ENCODE measurements at regions of chr6 and their contacts with region 1.

Region 1: DNA sequence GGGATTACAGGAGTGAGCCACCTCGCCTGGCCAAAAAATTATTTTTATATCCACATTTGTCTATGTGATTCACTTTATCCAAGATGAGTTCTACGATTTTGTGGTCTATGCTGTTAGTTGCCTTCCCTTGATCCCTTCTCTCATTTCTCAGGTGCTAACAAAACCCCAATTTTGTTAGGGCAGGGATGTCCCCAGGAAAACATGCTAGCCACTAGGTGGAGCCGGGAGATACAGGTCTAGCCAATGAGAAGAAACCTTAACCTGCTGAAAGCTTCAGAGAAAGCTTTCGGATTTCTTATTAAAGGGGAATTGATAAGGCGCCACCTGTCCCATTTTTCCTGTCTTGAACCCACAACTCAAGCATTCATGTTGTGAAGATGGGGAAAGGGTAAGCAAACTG is 167.4 kb upstream of the OLIG3 start:
- DNase-seq: peak; percentile 58
- H3K4me3 Mint-ChIP-seq: no peak overlapping the region
- H3K27ac Mint-ChIP-seq: no peak overlapping the region
- H3K4me1 Mint-ChIP-seq: peaks cover 24% of the 10 kb centered on the region
- H3K27me3 Mint-ChIP-seq: peaks cover 8% of the 10 kb centered on the region

Region 2: DNA sequence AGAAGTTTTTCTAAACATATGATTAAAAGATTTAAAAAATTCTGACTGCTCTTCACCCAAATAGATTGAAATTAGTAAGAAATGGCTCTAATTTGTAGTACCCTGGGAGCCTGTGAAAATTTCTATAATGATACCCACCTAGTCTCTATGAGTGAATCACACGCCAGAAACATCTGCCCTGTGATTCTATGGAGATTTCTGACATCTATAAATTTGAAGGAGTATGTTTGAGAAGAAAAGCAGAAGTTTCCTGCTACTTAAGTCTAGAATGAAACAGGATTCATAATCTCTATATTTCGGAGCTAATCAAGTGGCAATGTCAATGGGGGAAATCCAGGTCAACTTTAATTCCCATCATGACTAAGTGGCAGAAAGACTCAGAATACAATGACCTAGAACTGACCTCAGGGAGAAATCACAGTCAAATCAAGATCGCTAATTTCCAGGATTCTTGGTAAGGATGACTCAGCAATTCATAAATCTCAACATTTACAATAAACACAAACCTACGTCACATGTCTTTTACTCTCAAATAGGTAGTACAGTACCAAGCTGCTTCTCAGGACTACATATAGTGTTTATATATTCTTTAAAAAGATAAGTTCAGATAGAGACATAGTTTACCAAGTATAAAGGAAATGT is 19.2 kb after region 1 on chr6:
- CTCF ChIA-PET with region 1: interaction called, 6 read pairs
- POLR2A ChIA-PET with region 1: interaction called, 24 read pairs
- intact Hi-C with region 1: loop called (anchors 1 kb)
- DNase-seq: no peak
- H3K4me3 Mint-ChIP-seq: peak overlapping the region; percentile 18
- H3K27ac Mint-ChIP-seq: peak overlapping the region; percentile 75
- H3K4me1 Mint-ChIP-seq: peaks cover 64% of the 10 kb centered on the region
- H3K27me3 Mint-ChIP-seq: no peaks in the 10 kb centered on the region

Region 3: GRCh38 chr6:137697267-137697938 is 35.8 kb after region 1 on chr6:
- CTCF ChIA-PET with region 1: interaction called, 5 read pairs
- POLR2A ChIA-PET with region 1: interaction called, 25 read pairs
- intact Hi-C with region 1: loop called (anchors 1 kb)
- DNase-seq: peak; percentile 52
- H3K4me3 Mint-ChIP-seq: no peak overlapping the region
- H3K27ac Mint-ChIP-seq: peak overlapping the region; percentile 43
- H3K4me1 Mint-ChIP-seq: peaks cover 57% of the 10 kb centered on the region
- H3K27me3 Mint-ChIP-seq: peaks cover 1% of the 10 kb centered on the region

Region 4: DNA sequence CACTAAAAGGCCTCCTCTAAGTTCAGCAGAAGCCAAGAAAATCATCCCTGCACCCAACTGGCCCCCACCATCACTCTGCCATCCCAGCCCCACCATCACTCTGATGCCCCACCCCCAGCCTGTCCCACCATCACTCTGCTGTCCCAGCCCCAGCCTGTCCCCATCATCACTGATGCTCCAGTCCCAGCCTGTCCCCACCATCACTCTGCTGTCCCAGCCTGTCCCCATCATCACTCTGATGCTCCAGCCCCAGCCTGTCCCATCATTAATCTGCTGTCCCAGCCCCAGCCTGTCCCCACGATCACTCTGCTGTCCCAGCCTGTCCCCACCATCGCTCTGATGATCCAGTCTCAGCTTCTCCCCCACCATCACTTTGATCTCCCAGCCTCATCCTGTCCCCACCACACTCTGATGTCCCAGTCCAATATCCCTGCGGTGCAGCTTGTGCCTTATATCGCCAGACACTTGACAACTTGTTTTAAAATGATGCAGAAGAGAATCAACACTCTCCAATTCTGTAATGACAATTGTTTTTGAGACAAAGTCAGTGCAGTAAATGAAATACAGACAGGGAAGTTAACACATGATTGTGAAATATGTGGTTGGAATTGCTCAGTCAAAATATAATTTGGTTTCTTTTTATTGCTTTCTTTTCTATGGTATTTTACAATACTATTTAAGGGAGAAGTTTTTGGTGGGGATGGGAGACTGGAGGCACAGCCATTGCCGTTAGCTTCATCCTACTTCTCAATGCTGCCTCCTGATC is 306.3 kb after region 1 on chr6:
- CTCF ChIA-PET with region 1: no interaction called
- POLR2A ChIA-PET with region 1: no interaction called
- intact Hi-C with region 1: loop called (anchors 2 kb)
- DNase-seq: no peak
- H3K4me3 Mint-ChIP-seq: no peak overlapping the region
- H3K27ac Mint-ChIP-seq: peak overlapping the region; percentile 72
- H3K4me1 Mint-ChIP-seq: peaks cover 43% of the 10 kb centered on the region
- H3K27me3 Mint-ChIP-seq: no peaks in the 10 kb centered on the region

Region 5: GRCh38 chr6:137975188-137975940 is 313.8 kb after region 1 on chr6:
- CTCF ChIA-PET with region 1: no interaction called
- POLR2A ChIA-PET with region 1: no interaction called
- intact Hi-C with region 1: loop called (anchors 1 kb)
- DNase-seq: peak; percentile 38
- H3K4me3 Mint-ChIP-seq: peak overlapping the region; percentile 64
- H3K27ac Mint-ChIP-seq: peak overlapping the region; percentile 84
- H3K4me1 Mint-ChIP-seq: peaks cover 59% of the 10 kb centered on the region
- H3K27me3 Mint-ChIP-seq: no peaks in the 10 kb centered on the region

Region 6: GRCh38 chr6:138109042-138109997 is 447.7 kb after region 1 on chr6:
- CTCF ChIA-PET with region 1: no interaction called
- POLR2A ChIA-PET with region 1: no interaction called
- intact Hi-C with region 1: loop called (anchors 1 kb)
- DNase-seq: peak; percentile 89
- H3K4me3 Mint-ChIP-seq: no peak overlapping the region
- H3K27ac Mint-ChIP-seq: no peak overlapping the region
- H3K4me1 Mint-ChIP-seq: peaks cover 21% of the 10 kb centered on the region
- H3K27me3 Mint-ChIP-seq: peaks cover 12% of the 10 kb centered on the region